Aorta (tissue), 5 donors: ENCODE measurements at regions of chr5 and their contacts with region 1.

Region 1: DNA sequence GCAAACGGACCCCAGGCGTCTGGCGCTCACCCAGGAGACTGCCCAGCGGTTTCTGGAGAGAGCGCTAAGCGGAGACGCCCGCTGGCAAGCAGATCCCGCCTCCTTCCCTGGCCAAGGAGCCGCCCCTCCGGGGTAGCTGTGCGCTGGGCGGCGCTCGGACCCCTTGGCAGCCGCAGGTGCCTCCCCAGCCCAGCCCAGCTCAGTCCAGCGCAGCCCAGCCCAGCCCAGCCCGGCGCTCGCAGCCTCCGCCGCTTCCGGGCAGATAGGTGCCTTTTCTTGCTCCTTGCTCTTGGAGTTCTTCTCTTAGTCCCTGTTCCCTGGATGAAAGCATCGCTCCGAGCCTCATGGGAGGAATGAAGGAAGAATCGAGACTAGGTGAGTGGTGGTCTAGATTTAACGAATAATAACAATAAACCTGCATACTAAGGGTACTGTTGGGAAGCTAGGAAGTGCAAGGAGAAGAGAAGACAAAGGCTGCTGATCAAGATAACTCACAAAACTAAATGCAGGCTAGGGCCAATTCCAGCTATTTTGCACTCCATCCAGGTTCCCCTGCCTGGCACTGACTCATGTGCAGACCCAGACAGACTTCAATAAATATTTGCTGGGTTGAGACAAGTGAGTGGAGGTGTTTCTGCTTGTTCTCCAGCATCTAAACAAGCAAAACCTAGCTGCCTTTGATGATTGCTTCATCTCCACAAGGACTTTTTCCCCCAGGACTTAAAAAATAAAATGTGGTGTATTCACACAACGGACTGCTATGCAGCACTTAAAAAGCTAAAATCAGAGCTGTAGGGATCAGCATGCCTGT is at the start of gene STK32A:
- DNase-seq: peak; percentile 88 to 91
- ATAC-seq: peak; percentile 93
- H3K4me3 ChIP-seq: peak within 1 kb of the TSS; percentile 61 to 65
- H3K27ac ChIP-seq: peak within 1 kb of the TSS; percentile 16 to 90
- H3K4me1 ChIP-seq: peaks cover 0 to 1% of the 10 kb centered on the region in 2 donors
- H3K27me3 ChIP-seq: no peaks in the 10 kb centered on the region
- total RNA-seq, gene STK32A: 6.4 to 14.5 TPM

Region 2: DNA sequence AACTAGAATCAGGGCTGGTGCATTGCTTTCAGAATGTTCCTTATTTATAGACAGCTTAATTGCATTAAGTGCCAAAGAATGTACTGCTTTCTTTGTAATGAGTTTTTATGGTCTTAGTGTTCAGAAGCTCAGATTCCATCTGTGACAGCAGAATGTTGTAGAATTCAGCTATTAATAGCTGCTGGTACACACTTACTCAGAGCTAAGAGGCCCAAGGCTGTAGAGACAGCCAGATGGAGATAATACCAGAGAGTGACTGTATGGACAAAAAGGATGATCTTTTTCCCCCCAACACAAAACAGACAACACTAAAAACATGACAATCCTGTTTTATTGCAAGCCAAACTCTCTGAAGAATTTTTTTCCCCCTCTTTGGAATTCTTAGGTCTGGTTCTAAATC is 406.6 kb before region 1 on chr5:
- intact Hi-C with region 1: no loop called
- DNase-seq: no peak
- ATAC-seq: no peak
- H3K4me3 ChIP-seq: no peak overlapping the region
- H3K27ac ChIP-seq: no peak overlapping the region
- H3K4me1 ChIP-seq: peaks cover 3% of the 10 kb centered on the region in 2 donors
- H3K27me3 ChIP-seq: no peaks in the 10 kb centered on the region

Region 3: DNA sequence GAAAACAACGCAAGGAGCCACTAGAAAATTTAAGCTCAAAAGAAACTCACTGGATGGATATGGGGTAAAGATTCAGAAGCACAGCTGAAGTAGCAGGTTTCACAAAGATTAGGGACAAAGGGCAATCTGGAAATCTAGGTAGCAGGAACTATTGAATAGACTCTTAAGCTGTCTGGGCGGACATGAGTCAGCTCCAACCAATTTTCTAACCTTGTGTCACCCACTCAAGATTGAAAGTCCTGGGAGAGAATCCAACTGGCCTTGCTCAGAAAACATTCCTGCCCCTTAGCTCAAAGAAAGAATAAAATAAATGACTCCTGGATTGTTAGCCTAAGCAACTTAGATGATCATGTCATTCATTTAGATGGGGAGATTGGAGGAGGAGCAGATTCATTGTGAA is 68.9 kb after region 1 on chr5:
- intact Hi-C with region 1: loop called (anchors 5 kb)
- DNase-seq: peak in 1 of 2 donors; percentile 53
- ATAC-seq: peak; percentile 74
- H3K4me3 ChIP-seq: no peak overlapping the region
- H3K27ac ChIP-seq: peak overlapping the region; percentile 93 to 97
- H3K4me1 ChIP-seq: peaks cover 9% of the 10 kb centered on the region in 2 donors
- H3K27me3 ChIP-seq: no peaks in the 10 kb centered on the region

Region 4: DNA sequence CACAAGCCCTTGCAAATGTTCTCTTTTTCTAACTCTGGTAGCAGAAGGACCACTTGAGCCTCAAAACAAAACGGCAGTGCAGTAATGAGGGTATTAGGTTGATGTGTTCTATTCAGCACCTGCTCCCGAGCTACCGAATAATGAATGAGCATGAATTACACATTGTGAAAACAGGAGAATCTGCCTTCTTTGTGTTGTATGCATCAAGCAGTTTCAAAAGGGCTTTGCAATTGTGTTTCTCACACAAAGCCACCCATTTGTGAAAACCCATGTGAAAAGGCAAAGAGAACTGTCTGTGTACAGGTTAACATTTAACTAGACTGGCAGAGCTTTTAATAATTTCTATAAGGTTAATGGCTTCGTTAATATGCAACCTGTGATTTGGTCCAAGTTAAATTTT is 97.6 kb after region 1 on chr5:
- intact Hi-C with region 1: no loop called
- DNase-seq: no peak
- ATAC-seq: no peak
- H3K4me3 ChIP-seq: no peak overlapping the region
- H3K27ac ChIP-seq: no peak overlapping the region
- H3K4me1 ChIP-seq: no peaks in the 10 kb centered on the region
- H3K27me3 ChIP-seq: no peaks in the 10 kb centered on the region